ENCODE measurements at regions of chr9 and their contacts with region 1.

Region 1: GRCh38 chr9:32970554-32970953 is 30.9 kb downstream of the APTX start:
- DNase-seq: no peak
- H3K4me3 ChIP-seq: no peak overlapping the region
- H3K4me1 ChIP-seq: peaks cover 16% of the 10 kb centered on the region
- H3K27me3 ChIP-seq: no peaks in the 10 kb centered on the region

Region 2: DNA sequence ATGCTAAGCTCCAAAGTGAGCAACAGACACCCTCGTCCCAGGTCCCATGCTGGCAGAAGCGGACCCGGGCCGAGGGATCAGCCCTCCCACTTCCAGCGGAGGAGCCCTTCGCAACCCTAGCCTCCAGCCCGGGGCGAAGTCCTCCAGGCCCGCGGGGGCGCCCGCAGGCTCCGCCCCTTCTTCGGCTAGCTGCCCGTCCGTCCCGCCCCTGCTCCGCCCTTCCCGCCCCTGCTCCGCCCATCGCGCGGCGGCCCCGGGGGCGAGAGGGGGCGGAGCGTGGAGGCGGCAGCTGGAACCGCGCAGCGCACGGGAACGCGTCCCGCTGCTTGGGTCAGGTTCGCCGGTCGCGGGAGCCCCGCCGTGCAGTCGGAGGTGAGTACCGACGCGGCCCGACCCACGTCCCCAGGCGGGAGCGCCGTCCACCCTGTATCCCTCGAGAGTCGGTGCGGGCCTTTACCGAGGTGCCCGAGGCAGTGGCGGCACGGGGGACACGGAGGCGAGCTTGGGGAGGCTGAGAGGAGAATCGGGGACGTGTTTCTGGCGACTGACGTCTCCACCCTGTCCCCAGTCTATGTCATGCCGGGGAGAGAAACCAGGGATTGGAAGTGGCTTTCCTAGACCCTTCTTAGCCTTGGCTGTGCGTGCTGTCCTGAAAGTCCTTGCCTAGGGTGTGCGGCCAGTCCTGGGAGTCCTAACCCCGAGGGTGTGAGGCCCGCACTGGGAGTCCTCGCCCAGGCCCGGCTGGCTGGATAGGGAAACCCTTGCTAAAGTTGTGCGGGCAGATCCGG is 586.0 kb before region 1 on chr9 and contains the start of gene ACO1:
- in situ Hi-C with region 1: loop called (anchors 5 kb)
- DNase-seq: peak; percentile 78 to 94
- H3K4me3 ChIP-seq: peak within 1 kb of the TSS; percentile 91
- H3K4me1 ChIP-seq: peaks cover 13% of the 10 kb centered on the region
- H3K27me3 ChIP-seq: peaks cover 17% of the 10 kb centered on the region

Region 3: GRCh38 chr9:32589083-32589723 is 381.4 kb before region 1 on chr9:
- in situ Hi-C with region 1: loop called (anchors 5 kb)
- DNase-seq: peak in 1 of 2 experiments; percentile 47
- H3K4me3 ChIP-seq: no peak overlapping the region
- H3K4me1 ChIP-seq: no peaks in the 10 kb centered on the region
- H3K27me3 ChIP-seq: peaks cover 6% of the 10 kb centered on the region; the same call in 1 of the 2 replicates

Region 4: GRCh38 chr9:33220681-33221567 is 250.4 kb after region 1 on chr9:
- in situ Hi-C with region 1: no loop called
- DNase-seq: no peak
- H3K4me3 ChIP-seq: no peak overlapping the region
- H3K4me1 ChIP-seq: peaks cover 5% of the 10 kb centered on the region
- H3K27me3 ChIP-seq: peaks cover 16% of the 10 kb centered on the region